Lower leg skin (tissue), 4 donors: ENCODE measurements at regions of chr17 and their contacts with region 1.

Region 1: DNA sequence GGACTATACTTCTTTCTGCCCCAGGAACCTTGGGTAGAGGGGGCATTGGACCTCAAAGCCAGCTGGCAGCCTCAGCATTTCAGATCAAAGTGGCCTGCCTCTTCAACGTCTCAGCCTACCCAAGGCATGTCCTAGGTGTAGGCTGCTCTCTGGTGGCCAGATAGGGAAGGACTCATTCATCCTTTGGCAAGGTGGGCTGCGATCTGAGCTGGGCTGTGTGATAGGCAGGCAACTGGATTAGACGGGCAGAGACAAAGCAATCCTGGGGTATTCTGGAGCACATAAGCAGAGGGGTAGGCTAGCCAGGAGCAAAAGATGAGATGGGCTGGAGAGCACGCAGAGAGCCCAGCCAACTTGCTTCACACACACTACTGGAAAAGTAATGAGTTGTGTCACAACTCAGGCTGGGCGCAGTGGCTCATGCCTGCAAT is 8.8 kb upstream of the NAGLU start:
- DNase-seq: peak in 1 of 2 donors; percentile 73
- H3K4me3 ChIP-seq: no peak overlapping the region
- CTCF ChIP-seq: peak in 1 of 3 donors; percentile 57
- POLR2A ChIP-seq: no peak

Region 2: GRCh38 chr17:42422958-42423712 is 104.2 kb before region 1 on chr17 and contains the start of gene CAVIN1:
- intact Hi-C with region 1: loop called (anchors 5 kb)
- DNase-seq: peak; percentile 98 to 100
- H3K4me3 ChIP-seq: peak within 1 kb of the TSS; percentile 81
- CTCF ChIP-seq: no peak
- POLR2A ChIP-seq: peak in 1 of 2 donors; percentile 86
- total RNA-seq, gene CAVIN1: 171 to 336 (median 255) TPM

Region 3: GRCh38 chr17:42629411-42630009 is 102.2 kb after region 1 on chr17:
- intact Hi-C with region 1: no loop called
- DNase-seq: no peak
- H3K4me3 ChIP-seq: no peak overlapping the region
- CTCF ChIP-seq: no peak
- POLR2A ChIP-seq: no peak